Panc1 (cell line): ENCODE measurements at regions of chr9 and their contacts with region 1.

Region 1: GRCh38 chr9:5620494-5620893 is 8.4 kb upstream of the RIC1 start:
- DNase-seq: no peak
- ATAC-seq: no peak
- H3K4me3 ChIP-seq: no peak overlapping the region
- H3K27ac ChIP-seq: no peak overlapping the region
- H3K4me1 ChIP-seq: no peaks in the 10 kb centered on the region
- H3K27me3 ChIP-seq: no peaks in the 10 kb centered on the region
- CTCF ChIP-seq: no peak

Region 2: DNA sequence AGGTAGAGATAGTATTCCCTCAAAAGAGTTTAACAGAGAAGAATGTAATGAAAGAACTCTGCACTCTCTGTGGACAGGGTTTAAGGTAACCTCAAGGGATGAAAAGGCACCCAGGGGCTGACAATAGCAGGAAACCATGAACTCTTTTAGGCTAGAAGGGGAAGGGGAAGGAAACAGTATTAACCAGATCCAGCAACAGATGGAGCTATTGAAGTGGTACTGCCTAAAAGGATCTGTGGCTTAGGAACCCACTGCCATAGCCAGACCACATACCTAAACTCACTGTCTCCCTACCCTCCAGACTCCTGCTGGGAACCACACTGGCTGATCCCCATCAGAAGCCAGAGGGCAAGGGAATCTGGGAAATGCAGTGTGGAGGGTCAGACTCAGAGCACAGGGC is 218.3 kb before region 1 on chr9:
- CTCF ChIA-PET with region 1: no interaction called
- POLR2A ChIA-PET with region 1: no interaction called
- in situ Hi-C with region 1: no loop called
- intact Hi-C with region 1: no loop called
- DNase-seq: no peak
- ATAC-seq: no peak
- H3K4me3 ChIP-seq: no peak overlapping the region
- H3K27ac ChIP-seq: no peak overlapping the region
- H3K4me1 ChIP-seq: no peaks in the 10 kb centered on the region
- H3K27me3 ChIP-seq: no peaks in the 10 kb centered on the region
- CTCF ChIP-seq: no peak

Region 3: DNA sequence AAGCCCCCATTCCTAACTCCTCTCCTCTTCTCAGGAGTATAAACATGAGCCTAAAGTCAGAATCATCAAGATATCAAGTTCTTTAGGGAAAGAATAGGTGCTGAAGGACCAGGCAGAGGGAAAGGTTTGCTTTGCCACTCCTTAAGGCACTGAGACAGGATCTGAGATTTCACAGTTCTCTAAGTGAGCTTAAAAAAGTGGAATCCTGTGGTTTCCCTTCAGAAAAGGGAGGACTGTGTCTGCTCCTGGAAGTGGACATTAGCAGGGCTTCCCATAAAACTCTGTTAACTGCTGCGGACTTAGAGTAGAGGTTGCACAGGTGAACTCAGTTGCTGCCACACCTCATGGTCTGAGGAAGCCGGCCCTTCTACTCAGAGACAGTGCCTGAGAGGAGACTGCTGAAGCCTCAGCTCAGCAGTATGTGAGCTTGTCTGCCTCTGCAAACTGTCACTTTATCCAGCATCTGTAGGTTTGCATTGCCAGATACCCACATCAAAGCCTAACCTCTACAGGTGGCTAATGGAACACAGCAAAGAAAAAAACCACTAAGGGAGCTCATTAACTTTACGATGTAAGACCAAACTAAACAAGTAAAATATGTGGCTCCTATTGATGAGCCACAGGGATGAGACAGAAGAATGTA is 51.3 kb after region 1 on chr9:
- CTCF ChIA-PET with region 1: interaction called, 10 read pairs
- POLR2A ChIA-PET with region 1: no interaction called
- in situ Hi-C with region 1: no loop called
- intact Hi-C with region 1: no loop called
- DNase-seq: no peak
- ATAC-seq: no peak
- H3K4me3 ChIP-seq: no peak overlapping the region
- H3K27ac ChIP-seq: no peak overlapping the region
- H3K4me1 ChIP-seq: no peaks in the 10 kb centered on the region
- H3K27me3 ChIP-seq: no peaks in the 10 kb centered on the region
- CTCF ChIP-seq: no peak